Activated T-helper 1 cell treated with anti-CD3 and anti-CD28 coated beads, Interleukin-12 subunit alpha, Interleukin-12 subunit beta, Interleukin-2, Interleukin-4 antibody, amounts not matched to agents 30 ng/mL and 10 ng/mL and 1 ng/mL, durations not matched to agents 14 hours and 24 hours and 36 hours (primary cell): ENCODE measurements at regions of chr6 and their contacts with region 1.

Region 1: GRCh38 chr6:90393232-90393884 is 96.7 kb upstream of the BACH2 start:
- DNase-seq: peak; percentile 65
- H3K4me3 Mint-ChIP-seq: no peak overlapping the region
- H3K27ac Mint-ChIP-seq: peak overlapping the region; percentile 32
- H3K4me1 Mint-ChIP-seq: peaks cover 68% of the 10 kb centered on the region
- H3K27me3 Mint-ChIP-seq: no peaks in the 10 kb centered on the region

Region 2: GRCh38 chr6:90230548-90231215 is 162.7 kb before region 1 on chr6:
- intact Hi-C with region 1: loop called (anchors 1 kb)
- DNase-seq: no peak
- H3K4me3 Mint-ChIP-seq: peak overlapping the region; percentile 10
- H3K27ac Mint-ChIP-seq: peak overlapping the region; percentile 31
- H3K4me1 Mint-ChIP-seq: peaks cover 89% of the 10 kb centered on the region
- H3K27me3 Mint-ChIP-seq: no peaks in the 10 kb centered on the region

Region 3: DNA sequence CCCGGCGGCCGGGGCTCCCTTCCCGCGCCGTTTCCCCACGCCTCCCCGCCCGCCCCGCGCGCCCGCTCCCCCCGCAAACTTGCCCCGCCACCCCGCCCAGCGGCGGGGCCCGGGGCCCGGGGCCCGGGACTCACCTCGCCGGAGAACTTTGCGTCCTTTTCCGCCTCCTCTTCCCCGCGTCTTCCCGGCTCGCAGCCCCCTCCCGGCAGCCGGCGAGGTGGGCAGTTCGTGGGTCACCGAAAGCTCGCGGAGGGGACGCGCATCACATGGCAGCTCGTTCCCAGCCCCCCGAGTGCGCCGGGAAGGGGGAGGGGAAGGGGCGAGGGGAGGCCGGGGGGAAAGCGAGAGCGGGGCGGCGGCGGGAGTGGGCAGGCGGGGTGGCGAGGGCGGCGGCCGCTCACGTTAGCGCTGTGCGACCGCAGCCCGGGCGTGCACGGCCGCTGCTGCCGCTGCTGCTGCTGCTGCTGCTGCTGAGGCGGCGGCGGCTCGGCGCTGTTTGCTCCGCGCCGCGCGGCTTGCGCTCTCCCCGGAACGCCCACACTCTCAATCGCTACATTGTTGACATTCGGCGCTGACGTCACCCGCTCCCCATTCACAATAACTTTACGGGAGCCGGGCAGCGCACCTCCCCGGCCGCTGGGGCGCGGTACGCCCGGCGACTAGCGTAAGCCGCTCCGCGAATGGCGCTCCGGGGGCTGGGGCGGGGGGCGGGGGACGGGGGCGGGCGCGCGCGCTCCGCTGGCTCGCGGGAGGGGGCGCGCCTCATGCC is 96.8 kb before region 1 on chr6 and contains the start of gene BACH2:
- intact Hi-C with region 1: loop called (anchors 1 kb)
- DNase-seq: peak; percentile 88
- H3K4me3 Mint-ChIP-seq: peak within 1 kb of the TSS; percentile 93
- H3K27ac Mint-ChIP-seq: peak within 1 kb of the TSS; percentile 95
- H3K4me1 Mint-ChIP-seq: peaks cover 39% of the 10 kb centered on the region
- H3K27me3 Mint-ChIP-seq: peaks cover 21% of the 10 kb centered on the region
- total RNA-seq, gene BACH2: 68.1 and 71.2 TPM in 2 replicates

Region 4: DNA sequence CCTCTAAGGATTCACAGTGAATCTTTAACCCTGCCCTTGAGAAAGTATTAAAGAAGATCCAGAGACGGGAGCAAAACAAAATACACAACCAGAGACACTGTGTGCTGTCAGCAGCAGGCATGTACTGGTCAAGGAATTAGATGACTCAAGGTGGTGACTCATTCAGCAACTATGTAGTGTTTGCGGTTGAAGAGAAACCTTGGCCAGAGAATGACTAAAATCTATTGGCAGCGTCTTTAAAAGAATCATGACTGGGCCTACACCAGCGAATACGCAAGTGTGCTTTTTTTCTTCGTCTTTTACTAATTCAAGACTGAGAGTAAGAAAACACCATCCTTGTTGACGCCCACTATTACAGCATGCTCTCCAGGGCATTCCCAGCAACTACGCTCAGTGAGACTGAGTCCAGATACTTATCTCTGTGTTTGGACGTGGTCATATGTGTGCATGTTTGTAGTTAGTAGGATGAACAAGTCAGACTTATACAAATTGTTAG is 24.3 kb before region 1 on chr6:
- intact Hi-C with region 1: loop called (anchors 1 kb)
- DNase-seq: no peak
- H3K4me3 Mint-ChIP-seq: no peak overlapping the region
- H3K27ac Mint-ChIP-seq: peak overlapping the region; percentile 46
- H3K4me1 Mint-ChIP-seq: peaks cover 22% of the 10 kb centered on the region
- H3K27me3 Mint-ChIP-seq: peaks cover 4% of the 10 kb centered on the region

Region 5: GRCh38 chr6:90411292-90411781 is 18.0 kb after region 1 on chr6:
- intact Hi-C with region 1: loop called (anchors 1 kb)
- DNase-seq: peak; percentile 59
- H3K4me3 Mint-ChIP-seq: no peak overlapping the region
- H3K27ac Mint-ChIP-seq: peak overlapping the region; percentile 75
- H3K4me1 Mint-ChIP-seq: peaks cover 81% of the 10 kb centered on the region
- H3K27me3 Mint-ChIP-seq: no peaks in the 10 kb centered on the region

Region 6: DNA sequence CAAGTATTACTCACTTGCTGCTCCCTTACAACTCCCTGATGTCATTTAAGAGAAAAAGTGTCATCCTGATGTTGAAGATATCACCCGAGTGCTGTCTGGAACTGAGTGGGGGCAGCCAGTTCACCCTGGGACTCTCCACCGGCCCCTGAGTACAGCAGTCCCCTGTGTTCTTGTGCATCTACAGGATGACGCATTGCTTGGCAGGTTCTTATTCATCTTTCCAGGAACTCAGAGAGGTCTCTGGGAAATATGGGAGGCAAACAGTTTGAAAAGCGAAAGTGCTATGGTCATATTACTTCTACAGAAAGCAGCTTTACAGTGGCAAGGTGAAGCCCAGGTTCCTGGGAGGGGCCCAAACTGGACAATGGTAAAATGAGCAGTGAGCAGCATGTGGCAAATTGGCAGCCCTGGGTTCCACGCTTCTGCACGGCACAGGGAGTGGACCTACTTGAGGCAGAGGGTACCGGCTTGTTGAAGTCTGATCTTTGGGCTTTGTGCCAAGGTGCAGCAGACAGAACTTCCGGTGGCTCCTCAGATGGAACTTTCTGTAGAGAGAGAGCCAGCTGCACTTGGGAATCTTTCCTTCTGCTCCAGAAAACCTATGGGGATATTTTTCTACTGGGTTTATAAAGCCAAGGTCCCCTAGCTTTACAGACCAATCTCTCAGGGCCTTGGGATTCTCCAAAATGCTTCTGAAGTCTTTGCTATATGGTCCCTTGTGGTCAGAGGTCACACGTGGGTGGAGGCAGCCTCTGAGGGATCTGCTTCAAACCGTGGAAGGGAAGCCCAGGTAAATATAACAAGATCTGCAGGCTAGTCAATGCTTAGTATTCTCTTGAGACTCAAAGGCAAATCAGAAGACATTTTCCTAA is 65.2 kb after region 1 on chr6:
- intact Hi-C with region 1: loop called (anchors 1 kb)
- DNase-seq: peak; percentile 66
- H3K4me3 Mint-ChIP-seq: peak overlapping the region; percentile 47
- H3K27ac Mint-ChIP-seq: peak overlapping the region; percentile 93
- H3K4me1 Mint-ChIP-seq: peaks cover 65% of the 10 kb centered on the region
- H3K27me3 Mint-ChIP-seq: no peaks in the 10 kb centered on the region

Region 7: GRCh38 chr6:90533615-90534336 is 140.4 kb after region 1 on chr6:
- intact Hi-C with region 1: loop called (anchors 1 kb)
- DNase-seq: no peak
- H3K4me3 Mint-ChIP-seq: peak overlapping the region; percentile 40
- H3K27ac Mint-ChIP-seq: peak overlapping the region; percentile 87
- H3K4me1 Mint-ChIP-seq: peaks cover 52% of the 10 kb centered on the region
- H3K27me3 Mint-ChIP-seq: no peaks in the 10 kb centered on the region